ENCODE measurements at regions of chr14 and their contacts with region 1.

Region 1: GRCh38 chr14:53209370-53209769 is 56.2 kb upstream of the DDHD1 start:
- DNase-seq: no peak
- ATAC-seq: peak in 1 of 8 donors; percentile 38
- H3K4me3 ChIP-seq: no peak overlapping the region
- H3K27ac ChIP-seq: no peak overlapping the region
- H3K4me1 ChIP-seq: peaks cover 0 to 6% (median 0%) of the 10 kb centered on the region in 9 donors
- H3K27me3 ChIP-seq: no peaks in the 10 kb centered on the region
- CTCF ChIP-seq: no peak

Region 2: GRCh38 chr14:53137568-53138203 is 71.7 kb before region 1 on chr14:
- intact Hi-C with region 1: loop called in 1 of 10 experiments (anchors 2 kb)
- DNase-seq: no peak
- ATAC-seq: no peak
- H3K4me3 ChIP-seq: no peak overlapping the region
- H3K27ac ChIP-seq: no peak overlapping the region
- H3K4me1 ChIP-seq: no peaks in the 10 kb centered on the region
- H3K27me3 ChIP-seq: no peaks in the 10 kb centered on the region
- CTCF ChIP-seq: no peak

Region 3: GRCh38 chr14:53814392-53814791 is 605.0 kb after region 1 on chr14:
- intact Hi-C with region 1: no loop called
- DNase-seq: no peak
- ATAC-seq: peak in 3 of 8 donors; percentile 8 to 51 (median 17)
- H3K4me3 ChIP-seq: no peak overlapping the region
- H3K27ac ChIP-seq: no peak overlapping the region
- H3K4me1 ChIP-seq: peaks cover 0 to 15% (median 0%) of the 10 kb centered on the region in 9 donors
- H3K27me3 ChIP-seq: no peaks in the 10 kb centered on the region
- CTCF ChIP-seq: no peak

Region 4: DNA sequence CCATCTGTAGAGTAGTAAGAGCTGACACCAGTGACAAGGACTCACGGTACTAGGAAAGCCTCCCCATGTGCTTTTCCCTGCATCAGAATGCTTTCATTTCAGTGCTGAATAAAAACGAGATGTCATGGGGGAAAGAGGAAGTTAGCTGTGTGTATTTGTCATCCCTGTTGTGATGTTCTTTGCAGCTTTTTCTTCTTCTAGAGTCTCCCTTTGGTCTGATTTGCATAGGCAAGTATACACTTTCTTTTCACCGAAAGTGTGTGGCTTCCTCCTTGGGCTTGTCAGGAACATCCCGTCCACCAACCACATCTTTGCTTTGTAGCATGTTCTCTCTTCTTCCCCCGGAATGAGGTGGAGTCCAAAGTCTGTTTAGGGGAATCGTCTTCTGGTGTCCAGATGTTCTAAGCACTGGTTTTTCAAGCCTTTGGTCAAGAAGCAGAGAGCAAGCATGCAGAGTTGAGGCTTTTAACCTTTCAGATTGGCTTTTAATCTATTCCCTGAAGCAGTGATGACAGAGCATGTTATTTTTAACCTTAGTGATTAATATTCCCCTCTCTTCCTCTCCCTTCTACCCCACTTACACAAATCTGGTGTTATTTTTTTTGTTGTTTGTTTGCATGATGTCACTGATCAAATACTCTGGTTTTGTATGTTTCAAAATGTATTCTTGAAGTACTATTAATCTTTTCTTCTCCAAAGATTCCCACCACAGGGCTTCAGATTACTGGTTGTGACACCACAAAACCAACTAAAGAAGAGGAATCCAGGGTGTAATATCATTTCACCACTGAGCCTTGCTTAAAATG is 1521.0 kb after region 1 on chr14:
- intact Hi-C with region 1: loop called in 1 of 10 experiments (anchors 5 kb)
- DNase-seq: no peak
- ATAC-seq: peak; percentile 40 to 76 (median 66)
- H3K4me3 ChIP-seq: peak overlapping the region in 6 of 10 donors; percentile 3 to 30 (median 13)
- H3K27ac ChIP-seq: peak overlapping the region in 9 of 10 donors; percentile 9 to 76 (median 59)
- H3K4me1 ChIP-seq: peaks cover 0 to 52% (median 31%) of the 10 kb centered on the region in 9 donors
- H3K27me3 ChIP-seq: no peaks in the 10 kb centered on the region
- CTCF ChIP-seq: no peak

Measured in heart right ventricle (tissue), 16 donors.